GM10248 (cell line): ENCODE measurements at regions of chr11 and their contacts with region 1.

Region 1: DNA sequence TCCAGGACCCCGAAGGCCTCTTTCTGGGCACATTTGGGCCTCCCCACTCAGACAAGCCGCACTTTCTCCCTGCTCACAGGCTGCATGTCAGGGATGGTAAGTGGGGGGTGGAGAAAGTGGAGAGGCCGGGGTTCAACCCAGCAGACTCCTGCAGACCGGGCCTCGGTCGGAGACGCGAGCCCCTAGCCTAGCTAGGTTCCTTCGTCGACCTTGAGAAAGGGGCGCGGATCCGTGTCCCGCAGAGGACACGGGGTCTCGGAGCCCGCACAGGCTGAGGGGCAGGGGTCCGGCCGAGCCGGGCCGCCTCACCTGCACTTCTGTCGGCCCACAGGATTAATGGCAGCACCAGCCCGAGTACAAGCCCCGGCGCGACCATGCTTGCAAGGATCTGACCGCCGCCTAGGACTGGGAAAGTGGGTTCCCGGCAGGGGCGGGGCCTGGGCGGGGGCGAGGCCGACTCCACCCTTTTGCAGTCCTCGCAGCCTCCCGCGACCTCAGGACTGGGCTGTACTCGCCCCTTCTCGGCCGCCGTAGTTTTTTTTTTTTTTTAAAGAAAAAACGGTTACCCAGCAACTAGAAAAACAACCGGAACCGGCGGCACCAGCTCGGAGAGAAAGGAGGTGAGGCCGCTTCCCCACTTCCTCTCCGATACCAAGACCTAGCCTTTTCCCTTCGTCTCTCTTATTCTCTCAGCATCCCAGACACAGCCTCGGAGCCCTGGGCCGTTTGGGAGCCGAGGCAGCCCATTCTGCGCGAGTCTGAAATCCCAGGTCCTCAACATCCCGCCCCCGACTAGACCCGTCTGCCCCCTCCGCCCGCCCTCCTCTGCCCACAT is at the starts of genes SIAE and SPA17:
- DNase-seq: peak; percentile 96
- CTCF ChIP-seq: no peak

Region 2: DNA sequence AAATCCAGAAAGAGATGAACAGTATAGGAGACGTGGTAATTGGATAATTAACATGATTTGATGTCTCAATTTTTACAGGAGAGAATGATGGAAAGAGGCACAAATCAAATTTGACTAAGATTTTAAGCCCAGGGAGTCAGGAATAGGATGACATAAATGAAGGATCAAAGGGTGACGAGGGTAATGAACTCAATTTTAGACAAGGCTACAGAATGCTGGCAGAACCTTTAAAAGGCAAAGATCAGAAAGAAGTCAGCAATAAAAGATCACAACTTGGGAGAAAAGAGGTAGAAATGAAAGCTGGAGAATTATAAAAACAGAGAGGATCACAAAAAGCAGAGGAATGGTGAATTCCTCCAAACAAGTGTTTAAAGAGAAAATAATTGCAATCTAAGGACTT is 116.7 kb before region 1 on chr11:
- CTCF ChIA-PET with region 1: no interaction called
- POLR2A ChIA-PET with region 1: no interaction called
- DNase-seq: no peak
- CTCF ChIP-seq: no peak

Region 3: DNA sequence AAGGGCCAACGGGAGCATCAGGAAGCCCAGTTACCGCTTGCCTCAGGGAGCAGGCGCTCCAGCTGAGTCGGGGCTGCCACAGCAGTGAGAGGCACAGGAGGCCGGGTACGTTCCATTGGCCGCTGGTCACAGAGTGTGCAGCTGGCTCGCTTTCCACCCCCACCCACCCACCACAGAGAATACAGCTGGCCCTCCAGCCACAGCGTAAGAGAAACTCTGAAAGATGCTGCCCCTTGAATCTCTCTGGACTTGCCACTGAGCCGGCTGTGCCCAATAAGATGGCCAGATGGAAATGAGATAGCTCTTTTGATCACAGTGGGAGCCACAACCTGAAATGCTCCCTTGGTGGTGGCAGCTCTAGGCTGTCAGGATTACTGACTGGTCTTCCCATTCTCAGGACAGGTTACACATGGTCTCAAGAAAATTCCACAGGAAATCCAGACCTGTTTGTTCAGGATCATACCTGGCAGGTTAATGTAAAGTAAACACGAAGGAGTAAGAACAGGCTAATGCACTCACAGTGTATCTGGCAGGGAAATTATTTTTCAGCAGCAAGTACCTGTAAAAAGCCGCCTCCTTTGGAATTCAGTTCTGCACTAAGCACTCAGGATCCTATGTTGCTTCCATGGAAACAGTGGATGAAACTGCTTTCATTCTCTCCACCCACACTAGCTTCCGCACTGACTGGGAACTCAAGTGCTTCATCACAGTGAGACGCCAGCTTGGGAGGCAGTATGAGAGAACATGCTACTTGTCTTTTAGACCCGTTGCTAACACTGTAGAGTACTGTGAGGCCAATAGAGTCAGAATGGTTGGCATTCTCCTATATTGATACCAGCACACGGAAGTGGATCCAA is 16.5 kb before region 1 on chr11:
- CTCF ChIA-PET with region 1: interaction called, 31 read pairs
- POLR2A ChIA-PET with region 1: no interaction called
- DNase-seq: no peak
- CTCF ChIP-seq: no peak

Region 4: DNA sequence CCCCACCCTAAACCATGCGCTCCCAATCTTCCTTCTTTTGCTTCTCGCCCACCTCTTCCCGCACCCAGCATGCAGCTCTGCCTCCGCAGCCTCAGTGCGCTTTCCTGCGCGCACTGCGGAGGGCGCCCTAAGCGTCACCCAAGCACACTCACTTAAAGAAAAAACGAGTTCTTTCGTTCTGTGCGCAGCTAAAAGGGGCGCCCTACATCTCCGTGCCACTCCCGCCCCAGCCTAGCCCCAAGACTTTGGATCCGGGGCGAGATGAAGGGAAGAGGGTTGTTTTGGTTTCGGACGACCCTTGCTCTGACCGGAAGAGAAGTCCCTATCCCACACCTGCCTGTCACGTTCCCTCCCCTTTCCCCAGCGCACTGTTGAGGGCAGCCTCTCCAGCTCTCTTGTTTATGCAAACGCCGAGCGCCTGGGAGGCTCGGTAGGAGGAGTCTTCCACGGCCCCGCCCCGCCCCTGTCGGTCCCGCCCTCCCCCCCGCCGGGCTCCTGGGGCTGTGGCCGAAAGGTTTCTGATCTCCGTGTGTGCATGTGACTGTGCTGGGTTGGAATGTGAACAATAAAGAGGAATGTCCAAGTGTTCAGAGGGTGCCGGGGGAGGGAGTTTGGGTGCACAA is 73.2 kb after region 1 on chr11:
- CTCF ChIA-PET with region 1: interaction called, 12 read pairs
- POLR2A ChIA-PET with region 1: no interaction called
- DNase-seq: peak; percentile 92
- CTCF ChIP-seq: peak; percentile 82

Region 5: DNA sequence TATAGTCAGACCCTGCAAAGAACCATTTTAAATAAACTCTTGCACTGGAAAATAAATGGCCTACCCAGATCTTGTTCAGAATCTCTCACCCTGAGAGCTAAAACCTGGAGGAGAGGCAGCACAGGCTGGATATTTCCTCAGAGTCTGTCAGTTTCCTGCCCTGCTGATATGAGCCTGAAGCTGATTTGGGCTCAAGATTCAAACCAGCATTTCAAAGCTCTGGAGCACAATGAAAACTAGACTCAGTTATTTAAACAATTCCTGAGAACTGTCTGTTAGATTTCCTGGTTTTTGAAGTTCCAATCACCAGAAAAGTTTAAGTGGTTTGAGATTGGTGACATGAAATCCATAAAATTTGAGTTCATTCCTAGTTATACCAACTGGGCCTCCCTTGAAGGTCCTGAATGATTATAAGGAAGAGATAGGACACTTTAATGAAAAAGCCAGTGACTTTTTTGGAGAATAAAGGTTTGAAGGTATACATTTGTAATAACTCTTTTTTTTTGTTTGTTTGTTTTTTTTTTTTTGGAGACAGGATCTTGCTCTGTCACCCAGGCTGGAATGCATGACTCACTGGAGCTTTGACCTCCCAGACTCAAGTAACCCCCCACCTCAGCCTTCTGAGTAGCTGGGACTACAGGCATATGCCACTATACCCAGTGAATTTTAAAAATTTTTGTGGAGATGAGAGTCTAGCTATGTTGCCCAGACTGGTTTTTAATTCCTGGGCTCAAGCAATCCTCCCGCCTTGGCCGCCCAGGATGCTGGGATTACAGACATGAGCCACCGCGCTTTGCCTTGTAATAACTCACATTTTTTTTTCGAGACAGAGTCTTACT is 96.5 kb after region 1 on chr11:
- CTCF ChIA-PET with region 1: interaction called, 86 read pairs
- POLR2A ChIA-PET with region 1: no interaction called
- DNase-seq: no peak
- CTCF ChIP-seq: no peak

Region 6: DNA sequence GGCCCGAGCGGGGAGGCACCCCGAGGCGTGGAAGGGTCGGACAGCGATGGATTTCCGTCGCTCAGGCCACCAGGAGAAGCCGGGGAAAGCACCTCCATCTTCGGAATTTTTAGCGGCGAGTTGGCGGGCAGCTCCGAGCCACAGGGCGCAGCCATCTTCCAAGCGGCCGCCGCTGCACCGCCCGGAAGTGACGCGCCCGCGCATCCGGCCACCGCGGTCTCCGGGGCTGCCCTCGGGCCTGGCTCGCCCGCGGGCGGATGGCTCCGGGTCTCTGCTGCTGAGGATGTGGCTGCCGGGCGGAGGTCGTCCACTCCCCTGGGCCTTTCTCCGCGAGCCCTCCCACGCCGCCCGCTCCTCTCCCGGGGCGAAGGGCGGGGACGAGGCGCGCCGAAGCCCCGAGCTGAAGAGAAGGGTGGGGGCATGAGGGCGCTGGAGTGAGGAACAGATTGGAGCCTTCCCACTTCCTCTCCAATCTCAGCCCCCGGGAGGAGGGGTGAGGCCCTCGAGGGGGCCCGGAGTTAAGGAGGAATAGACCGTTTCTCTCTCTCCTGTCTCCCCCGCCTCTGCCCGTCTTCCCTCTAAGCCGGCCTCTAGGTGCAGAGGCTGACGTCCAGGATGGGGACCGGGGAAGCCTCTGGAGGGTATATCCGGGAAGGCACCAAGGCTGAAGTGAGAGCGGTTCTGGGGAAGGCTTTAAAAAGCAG is 126.8 kb after region 1 on chr11 and contains the start of gene MSANTD2:
- CTCF ChIA-PET with region 1: interaction called, 53 read pairs
- POLR2A ChIA-PET with region 1: no interaction called
- DNase-seq: peak; percentile 90
- CTCF ChIP-seq: no peak

Region 7: GRCh38 chr11:124886476-124886875 is 212.9 kb after region 1 on chr11:
- CTCF ChIA-PET with region 1: no interaction called
- POLR2A ChIA-PET with region 1: no interaction called
- DNase-seq: no peak
- CTCF ChIP-seq: no peak